Activated CD4-positive, alpha-beta memory T cell treated with anti-CD3 and anti-CD28 coated beads for 36 hours (primary cell): ENCODE measurements at regions of chr1 and their contacts with region 1.

Region 1: GRCh38 chr1:205477759-205478247 is 22.0 kb upstream of the BLACAT1 start:
- DNase-seq: no peak
- H3K4me3 Mint-ChIP-seq: no peak overlapping the region
- H3K27ac Mint-ChIP-seq: no peak overlapping the region
- H3K4me1 Mint-ChIP-seq: peaks cover 22% of the 10 kb centered on the region
- H3K27me3 Mint-ChIP-seq: peaks cover 22% of the 10 kb centered on the region

Region 2: DNA sequence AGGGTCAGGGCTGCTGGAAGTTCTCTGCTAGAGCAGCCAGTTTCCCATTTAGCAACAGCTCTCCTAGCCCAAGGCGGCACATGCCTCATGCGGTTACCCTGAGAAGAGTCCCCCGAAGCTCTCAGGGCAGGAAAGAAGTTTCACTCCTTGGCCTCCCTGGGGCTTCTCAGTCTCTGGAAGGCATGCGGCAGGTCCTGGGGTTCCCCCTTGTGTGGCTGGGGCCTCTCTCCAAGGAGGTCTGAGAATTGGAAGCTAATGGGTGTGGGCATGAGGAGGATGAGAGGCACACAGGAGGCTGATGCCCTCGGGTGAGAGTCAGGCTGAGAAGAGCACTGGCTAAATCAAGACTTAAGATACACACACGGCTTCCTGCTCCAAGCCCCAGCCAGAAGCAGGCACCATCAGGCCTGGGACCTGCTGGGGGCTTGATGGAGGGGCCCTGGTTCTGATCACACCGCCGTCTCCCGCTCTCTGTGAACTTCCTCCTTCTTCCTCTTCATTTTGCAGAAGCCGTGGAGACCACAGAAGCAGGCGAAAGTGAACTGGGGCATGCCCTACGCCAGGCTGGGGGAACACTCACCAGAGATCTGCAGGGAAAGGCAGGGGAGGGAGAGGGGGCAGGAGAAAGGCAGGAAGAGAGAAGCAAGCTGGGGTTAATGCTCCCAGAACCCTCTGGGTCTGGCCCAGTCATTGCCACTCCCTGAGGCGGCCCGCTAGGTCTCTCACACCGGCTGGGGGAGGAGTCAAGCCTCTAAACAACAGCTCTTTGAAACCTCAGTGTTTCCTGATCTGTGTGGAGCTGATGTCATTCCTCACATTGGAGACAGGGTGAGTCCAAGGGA is 37.1 kb before region 1 on chr1:
- CTCF ChIA-PET with region 1: interaction called, 51 read pairs
- POLR2A ChIA-PET with region 1: no interaction called
- intact Hi-C with region 1: loop called (anchors 5 kb)
- DNase-seq: peak; percentile 87
- H3K4me3 Mint-ChIP-seq: peak overlapping the region; percentile 73
- H3K27ac Mint-ChIP-seq: peak overlapping the region; percentile 83
- H3K4me1 Mint-ChIP-seq: peaks cover 20% of the 10 kb centered on the region
- H3K27me3 Mint-ChIP-seq: peaks cover 4% of the 10 kb centered on the region

Region 3: GRCh38 chr1:205543411-205544301 is 65.9 kb after region 1 on chr1:
- CTCF ChIA-PET with region 1: no interaction called
- POLR2A ChIA-PET with region 1: no interaction called
- intact Hi-C with region 1: no loop called
- DNase-seq: peak; percentile 64
- H3K4me3 Mint-ChIP-seq: peak overlapping the region; percentile 16
- H3K27ac Mint-ChIP-seq: no peak overlapping the region
- H3K4me1 Mint-ChIP-seq: peaks cover 5% of the 10 kb centered on the region
- H3K27me3 Mint-ChIP-seq: peaks cover 37% of the 10 kb centered on the region

Region 4: GRCh38 chr1:205626216-205626615 is 148.4 kb after region 1 on chr1:
- CTCF ChIA-PET with region 1: no interaction called
- POLR2A ChIA-PET with region 1: no interaction called
- intact Hi-C with region 1: no loop called
- DNase-seq: no peak
- H3K4me3 Mint-ChIP-seq: no peak overlapping the region
- H3K27ac Mint-ChIP-seq: peak overlapping the region; percentile 66
- H3K4me1 Mint-ChIP-seq: peaks cover 52% of the 10 kb centered on the region
- H3K27me3 Mint-ChIP-seq: no peaks in the 10 kb centered on the region